ENCODE measurements at regions of chr21 and their contacts with region 1.

Region 1: GRCh38 chr21:35051287-35051818 is 2.3 kb upstream of the RUNX1 start:
- DNase-seq: peak; percentile 54
- ATAC-seq: peak; percentile 45
- H3K4me3 Mint-ChIP-seq: peak overlapping the region; percentile 68
- H3K27ac Mint-ChIP-seq: peak overlapping the region; percentile 97
- H3K4me1 Mint-ChIP-seq: peaks cover 60% of the 10 kb centered on the region
- H3K27me3 Mint-ChIP-seq: no peaks in the 10 kb centered on the region
- CTCF ChIP-seq: no peak

Region 2: GRCh38 chr21:34865928-34866284 is 185.4 kb before region 1 on chr21:
- CTCF ChIA-PET with region 1: interaction called, 3 read pairs
- POLR2A ChIA-PET with region 1: interaction called, 21 read pairs
- intact Hi-C with region 1: loop called (anchors 1 kb)
- DNase-seq: no peak
- ATAC-seq: peak; percentile 82
- H3K4me3 Mint-ChIP-seq: peak overlapping the region; percentile 73
- H3K27ac Mint-ChIP-seq: peak overlapping the region; percentile 87
- H3K4me1 Mint-ChIP-seq: peaks cover 49% of the 10 kb centered on the region
- H3K27me3 Mint-ChIP-seq: no peaks in the 10 kb centered on the region
- CTCF ChIP-seq: no peak

Region 3: GRCh38 chr21:35010447-35010846 is 40.9 kb before region 1 on chr21:
- CTCF ChIA-PET with region 1: no interaction called
- POLR2A ChIA-PET with region 1: no interaction called
- intact Hi-C with region 1: no loop called
- DNase-seq: no peak
- ATAC-seq: no peak
- H3K4me3 Mint-ChIP-seq: no peak overlapping the region
- H3K27ac Mint-ChIP-seq: no peak overlapping the region
- H3K4me1 Mint-ChIP-seq: peaks cover 21% of the 10 kb centered on the region
- H3K27me3 Mint-ChIP-seq: no peaks in the 10 kb centered on the region
- CTCF ChIP-seq: no peak

Region 4: GRCh38 chr21:35020902-35021301 is 30.5 kb before region 1 on chr21:
- CTCF ChIA-PET with region 1: interaction called, 10 read pairs
- POLR2A ChIA-PET with region 1: interaction called, 101 read pairs
- intact Hi-C with region 1: loop called (anchors 1 kb)
- DNase-seq: no peak
- ATAC-seq: no peak
- H3K4me3 Mint-ChIP-seq: no peak overlapping the region
- H3K27ac Mint-ChIP-seq: peak overlapping the region; percentile 35
- H3K4me1 Mint-ChIP-seq: peaks cover 47% of the 10 kb centered on the region
- H3K27me3 Mint-ChIP-seq: no peaks in the 10 kb centered on the region
- CTCF ChIP-seq: no peak

Region 5: GRCh38 chr21:35189077-35189863 is 137.9 kb after region 1 on chr21:
- CTCF ChIA-PET with region 1: interaction called, 7 read pairs
- POLR2A ChIA-PET with region 1: interaction called, 28 read pairs
- intact Hi-C with region 1: loop called (anchors 1 kb)
- DNase-seq: no peak
- ATAC-seq: peak; percentile 96
- H3K4me3 Mint-ChIP-seq: peak overlapping the region; percentile 55
- H3K27ac Mint-ChIP-seq: peak overlapping the region; percentile 78
- H3K4me1 Mint-ChIP-seq: peaks cover 36% of the 10 kb centered on the region
- H3K27me3 Mint-ChIP-seq: no peaks in the 10 kb centered on the region
- CTCF ChIP-seq: no peak

Region 6: DNA sequence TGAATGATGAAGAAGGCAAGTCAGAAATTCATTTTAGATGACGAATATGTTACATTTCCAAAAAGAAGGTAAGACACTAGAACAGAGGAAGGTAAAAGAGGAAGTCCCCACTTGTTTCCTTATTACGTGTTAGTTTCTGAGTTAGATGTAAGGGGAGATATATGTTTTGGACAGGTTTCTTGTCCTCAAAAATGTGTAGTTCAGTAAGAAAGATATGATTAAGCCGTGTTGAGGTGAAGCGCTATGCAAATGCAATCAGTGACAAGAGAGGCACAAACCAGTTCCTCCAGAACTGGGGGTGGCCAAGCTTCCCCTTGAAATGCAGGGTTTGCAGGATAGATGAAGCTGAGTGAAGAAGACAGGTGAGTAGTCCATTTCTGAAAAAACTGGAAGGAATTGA is 291.1 kb after region 1 on chr21:
- CTCF ChIA-PET with region 1: interaction called, 4 read pairs
- POLR2A ChIA-PET with region 1: no interaction called
- intact Hi-C with region 1: loop called (anchors 1 kb)
- DNase-seq: no peak
- ATAC-seq: peak; percentile 78
- H3K4me3 Mint-ChIP-seq: peak overlapping the region; percentile 44
- H3K27ac Mint-ChIP-seq: peak overlapping the region; percentile 81
- H3K4me1 Mint-ChIP-seq: peaks cover 36% of the 10 kb centered on the region
- H3K27me3 Mint-ChIP-seq: no peaks in the 10 kb centered on the region
- CTCF ChIP-seq: no peak

Region 7: GRCh38 chr21:35840197-35840799 is 788.9 kb after region 1 on chr21:
- CTCF ChIA-PET with region 1: no interaction called
- POLR2A ChIA-PET with region 1: no interaction called
- intact Hi-C with region 1: loop called (anchors 10 kb)
- DNase-seq: no peak
- ATAC-seq: no peak
- H3K4me3 Mint-ChIP-seq: no peak overlapping the region
- H3K27ac Mint-ChIP-seq: no peak overlapping the region
- H3K4me1 Mint-ChIP-seq: no peaks in the 10 kb centered on the region
- H3K27me3 Mint-ChIP-seq: peaks cover 6% of the 10 kb centered on the region
- CTCF ChIP-seq: peak; percentile 70

Region 8: GRCh38 chr21:36156339-36156814 is 1105.0 kb after region 1 on chr21:
- CTCF ChIA-PET with region 1: no interaction called
- POLR2A ChIA-PET with region 1: no interaction called
- intact Hi-C with region 1: loop called (anchors 5 kb)
- DNase-seq: peak; percentile 100
- ATAC-seq: peak; percentile 91
- H3K4me3 Mint-ChIP-seq: peak overlapping the region; percentile 85
- H3K27ac Mint-ChIP-seq: peak overlapping the region; percentile 77
- H3K4me1 Mint-ChIP-seq: peaks cover 32% of the 10 kb centered on the region
- H3K27me3 Mint-ChIP-seq: no peaks in the 10 kb centered on the region
- CTCF ChIP-seq: no peak

Measured in activated B cell treated with CpG ODN at 0.5 μM for 24 hours (primary cell).